Ascending aorta (tissue), 2 donors: ENCODE measurements at regions of chr17 and their contacts with region 1.

Region 1: GRCh38 chr17:44186307-44187130 is at the start of gene TMUB2:
- DNase-seq: peak; percentile 98 to 99
- H3K4me3 ChIP-seq: peak within 1 kb of the TSS; percentile 75 to 92
- H3K27ac ChIP-seq: peak within 1 kb of the TSS; percentile 96 to 97
- H3K4me1 ChIP-seq: peaks cover 5 to 22% of the 10 kb centered on the region in 2 donors
- H3K27me3 ChIP-seq: no peaks in the 10 kb centered on the region
- CTCF ChIP-seq: no peak
- total RNA-seq, gene TMUB2: 27.9 TPM

Region 2: GRCh38 chr17:44070455-44071197 is 115.9 kb before region 1 on chr17 and contains the start of gene G6PC3:
- intact Hi-C with region 1: loop called (anchors 5 kb)
- DNase-seq: peak; percentile 83 to 98
- H3K4me3 ChIP-seq: peak within 1 kb of the TSS; percentile 66 to 68
- H3K27ac ChIP-seq: peak within 1 kb of the TSS; percentile 84 to 89
- H3K4me1 ChIP-seq: peaks cover 5 to 35% of the 10 kb centered on the region in 2 donors
- H3K27me3 ChIP-seq: no peaks in the 10 kb centered on the region
- CTCF ChIP-seq: peak in 1 of 3 experiments; percentile 14
- total RNA-seq, gene G6PC3: 111 TPM

Region 3: GRCh38 chr17:44123356-44124117 is 63.0 kb before region 1 on chr17 and contains the start of gene HDAC5:
- intact Hi-C with region 1: loop called (anchors 5 kb)
- DNase-seq: peak; percentile 86 to 97
- H3K4me3 ChIP-seq: peak within 1 kb of the TSS; percentile 99 to 100
- H3K27ac ChIP-seq: peak within 1 kb of the TSS; percentile 97 to 99
- H3K4me1 ChIP-seq: peaks cover 18 to 34% of the 10 kb centered on the region in 2 donors
- H3K27me3 ChIP-seq: no peaks in the 10 kb centered on the region
- CTCF ChIP-seq: peak; percentile 60 to 71 (median 65)
- total RNA-seq, gene HDAC5: 189 TPM

Region 4: GRCh38 chr17:44199553-44200477 is 13.3 kb after region 1 on chr17 and contains the start of gene ATXN7L3:
- intact Hi-C with region 1: loop called (anchors 1 kb)
- DNase-seq: peak; percentile 94 to 99
- H3K4me3 ChIP-seq: peak within 1 kb of the TSS; percentile 98 to 99
- H3K27ac ChIP-seq: peak within 1 kb of the TSS; percentile 98 to 100
- H3K4me1 ChIP-seq: peaks cover 0 to 21% of the 10 kb centered on the region in 2 donors
- H3K27me3 ChIP-seq: no peaks in the 10 kb centered on the region
- CTCF ChIP-seq: no peak
- total RNA-seq, gene ATXN7L3: 62.8 TPM

Region 5: DNA sequence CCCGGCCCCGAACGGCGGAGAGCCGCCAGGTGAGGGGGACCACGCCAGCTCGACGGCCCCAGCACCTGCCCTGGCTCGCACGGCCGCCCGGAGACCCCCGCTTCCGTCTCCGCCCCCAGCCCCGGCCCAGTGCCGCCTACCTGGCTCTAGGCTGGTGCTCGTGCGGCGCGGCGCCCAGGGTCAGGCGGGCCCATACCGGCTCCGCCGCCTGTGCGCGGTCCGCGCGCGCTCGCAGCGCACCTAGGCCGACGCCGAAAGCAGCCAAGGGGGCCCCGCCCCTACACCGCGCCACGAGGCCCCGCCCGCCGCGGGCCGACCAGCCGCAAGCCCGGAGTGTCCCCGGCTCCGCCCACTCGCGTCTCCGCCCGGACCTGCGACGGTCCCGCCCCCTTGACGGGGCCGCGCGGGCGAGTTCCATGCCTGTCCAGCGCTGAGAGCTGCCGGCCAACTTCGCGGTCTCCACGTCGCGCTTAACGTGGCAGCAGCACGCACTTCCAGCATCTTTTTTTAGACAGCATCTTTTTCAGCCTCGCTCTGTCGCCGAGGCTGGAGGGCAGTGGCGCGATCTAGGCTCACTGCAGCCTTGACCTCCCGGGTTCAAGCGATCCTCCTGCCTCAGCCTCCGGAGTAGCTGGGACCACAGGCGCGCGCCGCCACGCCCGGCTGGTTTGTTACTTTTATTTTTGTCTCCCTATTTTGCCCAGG is 138.2 kb after region 1 on chr17 and contains the start of gene SLC25A39:
- intact Hi-C with region 1: loop called (anchors 1 kb)
- DNase-seq: peak; percentile 67 to 97
- H3K4me3 ChIP-seq: peak within 1 kb of the TSS; percentile 74 to 88
- H3K27ac ChIP-seq: peak within 1 kb of the TSS; percentile 88 to 96
- H3K4me1 ChIP-seq: peaks cover 7 to 20% of the 10 kb centered on the region in 2 donors
- H3K27me3 ChIP-seq: no peaks in the 10 kb centered on the region
- CTCF ChIP-seq: no peak
- total RNA-seq, gene SLC25A39: 182 TPM

Region 6: GRCh38 chr17:44473367-44473766 is 286.8 kb after region 1 on chr17:
- intact Hi-C with region 1: no loop called
- DNase-seq: no peak
- H3K4me3 ChIP-seq: no peak overlapping the region
- H3K27ac ChIP-seq: no peak overlapping the region
- H3K4me1 ChIP-seq: no peaks in the 10 kb centered on the region
- H3K27me3 ChIP-seq: no peaks in the 10 kb centered on the region
- CTCF ChIP-seq: no peak

Region 7: DNA sequence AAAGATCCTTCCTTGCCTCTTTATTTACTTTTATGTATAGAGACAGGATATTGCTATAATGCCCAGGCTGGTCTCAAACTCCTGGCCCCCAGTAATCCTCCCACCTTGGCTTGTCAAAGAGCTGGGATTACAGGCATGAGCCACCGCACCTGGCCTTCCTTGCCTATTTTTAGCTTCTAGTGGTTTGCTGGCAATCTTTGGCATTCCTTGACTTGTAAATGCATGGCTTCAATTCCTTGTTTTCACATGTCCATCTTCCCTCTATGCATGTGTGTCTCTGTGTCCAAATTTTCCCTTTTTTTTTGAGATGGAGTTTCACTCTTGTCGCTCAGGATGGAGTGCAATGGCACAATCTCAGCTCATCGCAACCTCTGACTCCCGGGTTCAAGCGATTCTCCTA is 997.6 kb after region 1 on chr17:
- intact Hi-C with region 1: no loop called
- DNase-seq: no peak
- H3K4me3 ChIP-seq: no peak overlapping the region
- H3K27ac ChIP-seq: no peak overlapping the region
- H3K4me1 ChIP-seq: no peaks in the 10 kb centered on the region
- H3K27me3 ChIP-seq: no peaks in the 10 kb centered on the region
- CTCF ChIP-seq: no peak